ENCODE measurements at regions of chr22 and their contacts with region 1.

Region 1: DNA sequence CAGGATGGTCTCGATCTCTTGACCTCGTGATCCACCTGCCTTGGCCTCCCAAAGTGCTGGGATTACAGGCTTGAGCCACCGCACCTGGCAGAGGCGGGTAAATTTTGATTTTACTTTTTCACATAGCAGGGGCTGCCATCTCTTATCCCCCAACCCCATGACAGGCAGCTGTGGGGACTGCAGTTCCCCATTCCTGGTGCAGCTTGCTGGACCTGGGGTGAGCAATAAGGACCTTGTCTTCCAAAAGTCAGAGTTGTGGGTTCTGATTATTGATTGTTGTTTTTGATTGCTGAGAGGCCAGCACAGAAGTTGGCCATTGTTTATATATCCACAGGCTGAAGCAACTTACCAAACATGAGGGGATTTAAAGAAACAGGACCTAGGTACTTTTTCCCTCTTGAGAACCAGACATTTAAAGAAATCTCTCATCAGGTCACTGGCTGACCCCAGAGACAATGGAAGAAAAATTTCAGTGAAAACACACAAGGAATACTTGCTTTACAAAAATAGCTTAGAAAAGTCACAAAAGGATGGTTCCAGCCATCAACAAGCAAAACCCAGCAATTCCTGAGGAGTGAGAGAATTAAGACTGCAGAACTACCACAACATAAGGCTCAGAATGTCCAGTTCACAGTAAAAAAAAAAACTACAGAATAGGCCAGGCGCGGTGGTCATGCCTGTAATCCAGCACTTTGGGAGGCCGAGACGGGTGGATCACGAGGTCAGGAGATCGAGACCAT is 22.0 kb upstream of the MAPK1 start:
- DNase-seq: no peak
- ATAC-seq: no peak
- H3K4me3 ChIP-seq: no peak overlapping the region
- H3K4me3 Mint-ChIP-seq: no peak overlapping the region
- H3K27ac ChIP-seq: no peak overlapping the region
- H3K27ac Mint-ChIP-seq: no peak overlapping the region
- H3K4me1 ChIP-seq: no peaks in the 10 kb centered on the region
- H3K4me1 Mint-ChIP-seq: no peaks in the 10 kb centered on the region
- H3K27me3 ChIP-seq: no peaks in the 10 kb centered on the region
- H3K27me3 Mint-ChIP-seq: no peaks in the 10 kb centered on the region
- CTCF ChIP-seq: no peak

Region 2: GRCh38 chr22:21837248-21837979 is 52.0 kb before region 1 on chr22:
- CTCF ChIA-PET with region 1: no interaction called
- POLR2A ChIA-PET with region 1: no interaction called
- intact Hi-C with region 1: loop called in 1 of 2 experiments (anchors 5 kb)
- DNase-seq: no peak
- ATAC-seq: no peak
- H3K4me3 ChIP-seq: no peak overlapping the region
- H3K4me3 Mint-ChIP-seq: no peak overlapping the region
- H3K27ac ChIP-seq: no peak overlapping the region
- H3K27ac Mint-ChIP-seq: peak overlapping the region; percentile 29
- H3K4me1 ChIP-seq: peaks cover 15% of the 10 kb centered on the region
- H3K4me1 Mint-ChIP-seq: peaks cover 57% of the 10 kb centered on the region
- H3K27me3 ChIP-seq: no peaks in the 10 kb centered on the region
- H3K27me3 Mint-ChIP-seq: no peaks in the 10 kb centered on the region
- CTCF ChIP-seq: no peak

Region 3: GRCh38 chr22:22422629-22423112 is 533.2 kb after region 1 on chr22:
- CTCF ChIA-PET with region 1: no interaction called
- POLR2A ChIA-PET with region 1: no interaction called
- intact Hi-C with region 1: no loop called
- DNase-seq: peak; percentile 22 to 74 (median 64)
- ATAC-seq: peak; percentile 82
- H3K4me3 ChIP-seq: no peak overlapping the region
- H3K4me3 Mint-ChIP-seq: no peak overlapping the region
- H3K27ac ChIP-seq: no peak overlapping the region
- H3K27ac Mint-ChIP-seq: no peak overlapping the region
- H3K4me1 ChIP-seq: no peaks in the 10 kb centered on the region
- H3K4me1 Mint-ChIP-seq: no peaks in the 10 kb centered on the region
- H3K27me3 ChIP-seq: peaks cover 0 to 2% of the 10 kb centered on the region in 2 experiments
- H3K27me3 Mint-ChIP-seq: peaks cover 17% of the 10 kb centered on the region
- CTCF ChIP-seq: peak; percentile 77